Left lung (tissue), 14 donors: ENCODE measurements at regions of chr11 and their contacts with region 1.

Region 1: DNA sequence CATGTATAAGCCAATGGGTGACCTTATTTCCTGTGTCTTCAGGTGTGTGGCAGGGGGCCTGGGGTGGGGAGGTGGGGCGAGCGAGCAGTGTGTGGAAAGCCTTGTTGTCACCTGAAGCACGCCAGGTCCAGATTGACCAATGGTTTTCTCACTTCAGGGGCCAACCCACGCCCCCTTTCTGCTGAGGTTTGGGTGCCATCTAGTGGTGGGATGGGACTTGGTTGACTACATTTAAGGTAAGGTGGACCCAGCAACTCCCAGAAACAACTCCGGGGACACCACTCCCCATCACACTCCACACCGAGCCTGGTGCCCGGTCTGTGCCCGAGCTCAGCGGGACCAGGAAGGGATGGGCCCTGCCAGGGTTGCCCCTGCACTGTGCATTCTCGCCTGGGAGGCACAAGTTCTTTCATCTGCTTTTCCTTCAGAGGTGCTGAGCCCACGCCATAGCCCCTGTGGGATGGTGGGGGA is 40.0 kb downstream of the TPCN2 start:
- DNase-seq: peak in 3 of 4 donors; percentile 49 to 76 (median 57)
- ATAC-seq: peak; percentile 85
- H3K4me3 ChIP-seq: no peak overlapping the region
- H3K27ac ChIP-seq: no peak overlapping the region
- H3K4me1 ChIP-seq: no peaks in the 10 kb centered on the region
- H3K27me3 ChIP-seq: no peaks in the 10 kb centered on the region
- CTCF ChIP-seq: peak; percentile 43 to 51

Region 2: DNA sequence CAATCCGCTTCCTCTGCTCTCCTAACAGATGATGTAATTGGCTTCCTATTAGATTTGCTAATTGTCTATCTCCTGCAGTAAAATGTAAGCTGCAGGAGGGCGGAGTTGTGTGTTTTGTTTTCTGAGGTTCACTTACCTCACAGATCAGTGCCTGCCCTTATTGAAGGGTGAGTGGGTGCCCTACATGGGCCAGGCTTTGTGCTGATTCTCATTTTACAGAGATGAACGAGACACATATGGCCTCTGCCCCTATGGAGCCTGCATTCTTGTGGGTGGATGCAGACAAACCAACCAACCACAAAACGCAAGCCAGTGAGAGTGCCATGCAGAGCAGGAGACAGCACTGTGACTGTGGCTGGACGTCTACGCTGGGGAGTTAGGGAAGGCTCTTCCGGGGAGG is 347.2 kb before region 1 on chr11:
- intact Hi-C with region 1: no loop called
- DNase-seq: no peak
- ATAC-seq: no peak
- H3K4me3 ChIP-seq: no peak overlapping the region
- H3K27ac ChIP-seq: no peak overlapping the region
- H3K4me1 ChIP-seq: peaks cover 0 to 5% of the 10 kb centered on the region in 2 donors
- H3K27me3 ChIP-seq: no peaks in the 10 kb centered on the region
- CTCF ChIP-seq: no peak

Region 3: DNA sequence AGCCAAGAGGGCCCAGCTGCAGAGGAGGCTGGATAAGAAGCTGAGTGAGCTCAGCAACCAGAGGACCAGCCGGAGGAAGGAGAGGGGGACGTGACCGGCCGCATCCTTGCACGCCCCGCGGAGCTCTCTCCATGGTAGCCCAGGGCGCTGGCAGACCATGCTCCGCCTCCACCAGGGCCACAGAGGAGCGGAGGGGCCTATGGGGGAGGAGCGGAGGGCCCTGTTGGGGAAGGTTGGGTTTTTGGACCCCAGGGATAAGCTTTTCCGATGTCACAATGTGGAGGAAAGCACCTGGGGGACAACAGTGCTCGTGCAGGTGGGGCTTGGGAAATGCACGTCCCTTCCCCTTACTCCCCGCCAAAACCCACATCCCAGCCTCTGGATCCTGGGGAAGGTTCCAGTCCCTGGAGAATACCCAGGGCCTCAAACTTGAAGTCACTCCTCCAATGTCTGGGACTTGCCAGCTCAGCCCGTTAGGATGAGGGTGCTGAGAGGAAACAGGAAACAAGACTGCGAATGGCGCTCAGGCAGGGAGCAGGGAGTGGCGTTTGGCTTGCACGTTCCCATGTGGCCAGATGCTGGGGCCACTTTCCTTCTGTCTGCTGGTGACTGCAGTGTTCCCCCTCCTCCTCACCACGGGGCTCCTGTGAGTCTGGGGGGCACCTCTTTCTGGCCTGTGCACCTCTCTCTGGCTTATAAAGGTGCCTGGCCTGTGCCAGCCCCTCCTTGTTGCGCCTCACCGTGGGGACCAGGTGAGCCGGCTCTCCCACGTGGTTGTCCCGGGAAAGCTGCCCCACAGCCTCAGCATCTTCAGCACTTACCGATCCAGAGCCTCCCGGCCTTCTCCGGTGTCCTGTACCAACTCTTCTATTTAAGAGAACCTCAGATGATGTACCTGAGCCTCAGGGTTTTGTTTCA is 148.8 kb before region 1 on chr11:
- intact Hi-C with region 1: loop called in 1 of 2 experiments (anchors 10 kb)
- DNase-seq: no peak
- ATAC-seq: no peak
- H3K4me3 ChIP-seq: no peak overlapping the region
- H3K27ac ChIP-seq: no peak overlapping the region
- H3K4me1 ChIP-seq: no peaks in the 10 kb centered on the region
- H3K27me3 ChIP-seq: no peaks in the 10 kb centered on the region
- CTCF ChIP-seq: no peak